ENCODE measurements at regions of chr4 and their contacts with region 1.

Region 1: DNA sequence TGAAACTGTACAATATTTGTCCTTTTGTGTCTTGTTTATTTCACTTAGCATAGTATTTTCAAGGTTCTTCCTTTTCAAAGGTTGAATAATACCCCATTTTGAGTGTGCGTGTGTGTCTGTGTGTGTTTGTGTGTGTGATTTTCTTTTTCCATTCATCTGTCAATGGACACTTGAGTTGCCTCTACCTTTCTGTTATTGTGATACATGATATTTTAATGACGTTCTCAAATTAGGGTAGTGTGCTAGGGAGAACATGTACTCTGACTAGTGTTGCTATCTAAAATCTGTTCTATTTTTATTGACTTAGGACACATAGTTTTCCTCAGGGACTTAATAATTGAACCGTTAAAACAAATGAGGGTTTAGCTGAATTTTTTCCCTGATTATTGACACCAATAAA is 9.9 kb downstream of the MMRN1 start:
- DNase-seq: no peak
- ATAC-seq: no peak
- H3K4me3 Mint-ChIP-seq: no peak overlapping the region
- H3K27ac Mint-ChIP-seq: no peak overlapping the region
- H3K4me1 Mint-ChIP-seq: no peaks in the 10 kb centered on the region
- H3K27me3 Mint-ChIP-seq: no peaks in the 10 kb centered on the region
- CTCF ChIP-seq: no peak

Region 2: DNA sequence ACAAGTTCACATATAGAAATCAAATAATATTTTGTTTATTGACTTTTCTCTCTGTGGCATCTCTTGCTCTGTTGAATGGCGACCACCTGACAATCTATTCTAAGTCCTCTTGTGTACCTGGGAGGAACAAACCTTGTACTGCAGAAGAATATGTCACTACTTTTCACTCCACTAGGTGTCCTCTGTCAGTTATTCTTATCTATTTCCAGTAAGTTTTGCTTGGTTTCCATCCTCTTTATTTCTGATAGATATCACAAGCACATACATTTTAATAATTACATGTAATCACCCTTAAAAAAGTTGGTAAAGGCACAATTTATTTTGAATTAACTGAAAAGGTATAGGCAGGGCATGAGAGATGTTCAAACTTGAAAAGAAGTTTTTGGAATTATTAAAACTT is 305.9 kb before region 1 on chr4:
- CTCF ChIA-PET with region 1: no interaction called
- POLR2A ChIA-PET with region 1: no interaction called
- intact Hi-C with region 1: loop called (anchors 2 kb)
- DNase-seq: no peak
- ATAC-seq: no peak
- H3K4me3 Mint-ChIP-seq: no peak overlapping the region
- H3K27ac Mint-ChIP-seq: no peak overlapping the region
- H3K4me1 Mint-ChIP-seq: no peaks in the 10 kb centered on the region
- H3K27me3 Mint-ChIP-seq: peaks cover 5% of the 10 kb centered on the region
- CTCF ChIP-seq: no peak

Region 3: DNA sequence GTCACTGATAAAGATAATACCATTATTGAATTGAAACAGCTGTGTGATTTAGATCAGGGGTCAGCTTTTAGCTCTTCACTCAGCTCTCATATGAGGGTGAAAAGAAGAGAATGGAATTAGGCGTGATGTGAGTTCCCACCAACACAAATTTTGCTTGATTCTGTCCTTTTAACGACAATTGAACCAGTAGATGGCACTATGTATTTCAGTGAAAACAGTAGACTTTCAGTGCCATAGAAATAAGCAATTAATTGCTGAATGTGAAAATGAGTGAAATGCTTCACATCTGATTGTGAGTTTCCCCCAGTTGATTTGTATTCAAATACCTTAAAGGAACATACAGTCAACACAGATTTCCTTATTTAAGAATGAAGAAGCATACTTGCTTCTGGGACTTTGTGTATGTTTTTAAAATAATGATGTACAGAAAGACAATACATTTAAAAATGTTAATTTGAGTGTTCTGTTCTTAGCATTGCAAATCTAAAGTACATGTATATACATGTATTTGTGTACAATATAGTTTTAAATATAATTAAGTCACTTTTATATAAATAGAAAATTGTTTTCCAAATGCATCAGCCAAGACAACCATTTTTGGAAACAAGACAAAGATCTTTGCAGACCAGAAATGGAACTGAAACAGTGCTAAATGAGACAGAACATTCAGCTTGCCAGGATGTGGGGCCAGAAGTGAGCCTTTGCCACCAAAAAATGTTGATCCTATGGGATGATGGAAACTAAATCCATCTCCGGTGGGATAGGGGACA is 246.4 kb before region 1 on chr4:
- CTCF ChIA-PET with region 1: no interaction called
- POLR2A ChIA-PET with region 1: no interaction called
- intact Hi-C with region 1: loop called (anchors 2 kb)
- DNase-seq: no peak
- ATAC-seq: no peak
- H3K4me3 Mint-ChIP-seq: no peak overlapping the region
- H3K27ac Mint-ChIP-seq: peak overlapping the region; percentile 51
- H3K4me1 Mint-ChIP-seq: peaks cover 7% of the 10 kb centered on the region
- H3K27me3 Mint-ChIP-seq: peaks cover 2% of the 10 kb centered on the region
- CTCF ChIP-seq: no peak

Region 4: GRCh38 chr4:89889289-89889688 is 15.2 kb before region 1 on chr4:
- CTCF ChIA-PET with region 1: no interaction called
- POLR2A ChIA-PET with region 1: no interaction called
- intact Hi-C with region 1: no loop called
- DNase-seq: no peak
- ATAC-seq: no peak
- H3K4me3 Mint-ChIP-seq: no peak overlapping the region
- H3K27ac Mint-ChIP-seq: no peak overlapping the region
- H3K4me1 Mint-ChIP-seq: peaks cover under 1% of the 10 kb centered on the region
- H3K27me3 Mint-ChIP-seq: peaks cover 6% of the 10 kb centered on the region
- CTCF ChIP-seq: no peak

Measured in activated B cell treated with CpG ODN at 0.5 μM for 24 hours (primary cell).